ENCODE measurements at regions of chr18 and their contacts with region 1.

Region 1: DNA sequence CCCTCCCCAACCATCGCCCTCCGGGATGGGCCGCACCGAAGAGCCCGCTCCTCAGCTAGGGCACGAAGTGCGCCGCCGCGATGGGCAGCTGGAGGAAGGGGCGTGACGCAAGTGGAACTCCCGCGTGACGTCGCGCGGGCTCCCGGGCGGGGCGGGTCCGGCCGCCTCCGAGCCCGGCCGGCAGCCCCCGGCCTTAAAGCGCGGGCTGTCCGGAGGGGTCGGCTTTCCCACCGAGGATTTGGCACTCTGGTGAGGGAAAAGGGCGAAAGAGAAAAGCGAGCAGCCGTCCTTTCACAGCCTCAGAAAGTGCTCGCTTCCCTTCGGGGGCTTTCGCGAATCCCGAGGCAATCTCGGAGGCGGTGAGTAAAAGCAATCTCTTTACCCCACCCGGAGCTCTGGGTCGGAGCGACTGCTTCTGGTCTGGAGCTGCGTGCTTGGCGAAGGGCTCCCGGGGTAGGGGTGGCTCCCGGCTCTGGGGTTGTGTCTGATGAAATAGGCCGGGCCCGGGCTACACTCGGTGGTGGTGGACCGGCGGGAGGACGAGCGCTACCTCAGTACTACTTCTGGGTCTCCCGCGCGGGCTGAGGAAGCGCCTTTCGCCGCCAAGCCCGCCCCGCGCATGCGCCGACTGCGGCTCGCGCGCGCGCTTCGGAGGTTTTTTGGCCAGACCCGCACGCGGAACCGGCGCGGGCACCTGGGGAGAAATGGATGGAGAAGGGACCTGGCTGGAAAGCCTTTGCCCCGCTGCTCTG is at the start of gene RBBP8:
- DNase-seq: peak; percentile 89
- ATAC-seq: peak; percentile 76
- H3K4me3 Mint-ChIP-seq: peak within 1 kb of the TSS; percentile 89
- H3K27ac Mint-ChIP-seq: peak within 1 kb of the TSS; percentile 96
- H3K4me1 Mint-ChIP-seq: peaks cover 17% of the 10 kb centered on the region
- H3K27me3 Mint-ChIP-seq: no peaks in the 10 kb centered on the region
- total RNA-seq, gene RBBP8: 74.3 to 101 TPM

Region 2: DNA sequence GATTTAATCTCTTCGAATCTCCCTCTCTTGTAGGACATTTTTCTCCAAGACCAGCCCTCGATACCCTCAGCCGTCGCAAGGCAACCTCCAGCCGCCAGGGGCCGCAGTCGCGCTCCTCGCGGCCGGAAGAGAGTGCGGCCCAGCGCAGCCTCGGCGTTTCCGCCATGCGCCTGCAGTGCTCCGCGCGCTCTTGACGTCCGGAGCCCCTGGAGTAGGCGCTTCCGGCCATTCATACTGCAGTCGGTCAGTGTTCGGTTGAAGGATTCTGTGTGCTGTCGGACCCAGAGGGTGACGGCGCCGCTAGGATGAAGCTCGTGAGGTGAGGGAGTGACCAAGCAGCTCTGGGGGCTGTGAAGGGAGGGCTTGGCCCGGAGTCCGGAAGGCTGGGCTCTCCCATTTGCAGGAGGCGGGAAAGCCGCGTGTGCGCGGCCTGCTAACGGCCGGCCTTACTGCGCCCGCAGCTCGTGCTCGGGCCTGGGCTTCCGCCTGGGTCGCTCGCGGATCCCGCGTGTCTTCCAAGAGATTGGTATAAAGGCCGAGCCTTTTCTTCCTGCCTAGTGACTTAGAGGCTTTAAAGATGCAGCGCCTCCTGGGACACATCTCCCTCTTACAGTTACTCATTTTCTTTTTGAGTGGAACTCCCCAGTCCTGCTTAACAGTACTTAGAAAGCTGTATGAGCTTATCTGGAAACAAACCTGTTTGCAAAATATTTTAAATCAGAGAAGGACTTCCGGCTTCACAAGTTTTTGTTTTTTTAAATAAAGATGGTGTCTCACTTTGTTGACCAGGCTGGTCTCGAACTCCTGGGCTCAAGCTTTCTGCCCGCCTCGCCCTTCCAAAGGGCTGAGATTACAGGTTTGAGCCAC is 1321.0 kb before region 1 on chr18 and contains the start of gene SNRPD1:
- CTCF ChIA-PET with region 1: no interaction called
- POLR2A ChIA-PET with region 1: no interaction called
- intact Hi-C with region 1: loop called in 1 of 2 experiments (anchors 2 kb)
- DNase-seq: peak; percentile 93
- ATAC-seq: peak; percentile 98
- H3K4me3 Mint-ChIP-seq: peak within 1 kb of the TSS; percentile 92
- H3K27ac Mint-ChIP-seq: peak within 1 kb of the TSS; percentile 99
- H3K4me1 Mint-ChIP-seq: peaks cover 34% of the 10 kb centered on the region
- H3K27me3 Mint-ChIP-seq: no peaks in the 10 kb centered on the region
- total RNA-seq, gene SNRPD1: 79.9 to 163 TPM

Region 3: GRCh38 chr18:22977847-22978701 is 44.7 kb after region 1 on chr18:
- CTCF ChIA-PET with region 1: interaction called, 30 read pairs
- POLR2A ChIA-PET with region 1: interaction called, 8 read pairs
- intact Hi-C with region 1: loop called (anchors 1 kb)
- DNase-seq: no peak
- ATAC-seq: peak; percentile 83
- H3K4me3 Mint-ChIP-seq: peak overlapping the region; percentile 46
- H3K27ac Mint-ChIP-seq: peak overlapping the region; percentile 73
- H3K4me1 Mint-ChIP-seq: peaks cover 20% of the 10 kb centered on the region
- H3K27me3 Mint-ChIP-seq: no peaks in the 10 kb centered on the region

Region 4: DNA sequence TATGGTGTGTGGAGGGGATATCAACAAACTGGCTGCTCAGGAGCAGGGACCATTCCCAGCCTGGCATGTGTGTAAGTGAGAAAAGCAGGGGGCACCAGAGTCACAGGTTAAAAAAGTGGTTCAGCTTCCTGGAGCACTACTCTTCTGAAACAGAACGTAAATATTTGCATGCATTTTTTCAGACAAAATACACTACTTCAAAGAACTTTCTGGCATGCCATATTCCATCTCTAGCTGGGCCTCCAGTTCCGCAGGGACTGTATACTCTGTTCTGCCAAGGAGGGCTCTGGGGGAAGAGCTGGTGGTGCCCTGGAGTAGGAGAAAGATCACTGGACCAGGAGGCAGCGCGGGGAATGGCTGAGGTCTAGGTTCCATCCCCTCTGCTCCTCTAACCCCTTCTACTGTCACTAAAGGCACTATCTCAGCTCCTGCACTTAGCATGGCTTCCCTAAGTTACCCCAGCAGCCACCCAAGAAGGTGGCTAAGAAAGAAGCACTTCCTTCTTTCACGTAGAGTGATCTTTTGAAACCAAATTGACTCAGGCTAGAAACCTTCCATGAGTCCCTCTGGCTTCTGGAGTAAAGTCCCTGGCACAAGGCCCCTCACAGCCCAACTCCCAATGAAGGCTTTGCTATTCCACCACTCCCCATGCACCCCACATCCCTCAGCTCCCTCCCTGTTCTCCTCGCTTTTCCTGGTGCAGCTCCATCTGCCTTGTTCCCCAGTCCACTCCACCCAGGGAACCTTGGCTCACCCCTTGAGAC is 144.3 kb after region 1 on chr18:
- CTCF ChIA-PET with region 1: no interaction called
- POLR2A ChIA-PET with region 1: no interaction called
- intact Hi-C with region 1: no loop called
- DNase-seq: no peak
- ATAC-seq: no peak
- H3K4me3 Mint-ChIP-seq: no peak overlapping the region
- H3K27ac Mint-ChIP-seq: no peak overlapping the region
- H3K4me1 Mint-ChIP-seq: peaks cover 23% of the 10 kb centered on the region
- H3K27me3 Mint-ChIP-seq: no peaks in the 10 kb centered on the region

Region 5: GRCh38 chr18:23106580-23106979 is 173.2 kb after region 1 on chr18:
- CTCF ChIA-PET with region 1: no interaction called
- POLR2A ChIA-PET with region 1: no interaction called
- intact Hi-C with region 1: no loop called
- DNase-seq: no peak
- ATAC-seq: no peak
- H3K4me3 Mint-ChIP-seq: no peak overlapping the region
- H3K27ac Mint-ChIP-seq: no peak overlapping the region
- H3K4me1 Mint-ChIP-seq: peaks cover 3% of the 10 kb centered on the region
- H3K27me3 Mint-ChIP-seq: no peaks in the 10 kb centered on the region

Region 6: DNA sequence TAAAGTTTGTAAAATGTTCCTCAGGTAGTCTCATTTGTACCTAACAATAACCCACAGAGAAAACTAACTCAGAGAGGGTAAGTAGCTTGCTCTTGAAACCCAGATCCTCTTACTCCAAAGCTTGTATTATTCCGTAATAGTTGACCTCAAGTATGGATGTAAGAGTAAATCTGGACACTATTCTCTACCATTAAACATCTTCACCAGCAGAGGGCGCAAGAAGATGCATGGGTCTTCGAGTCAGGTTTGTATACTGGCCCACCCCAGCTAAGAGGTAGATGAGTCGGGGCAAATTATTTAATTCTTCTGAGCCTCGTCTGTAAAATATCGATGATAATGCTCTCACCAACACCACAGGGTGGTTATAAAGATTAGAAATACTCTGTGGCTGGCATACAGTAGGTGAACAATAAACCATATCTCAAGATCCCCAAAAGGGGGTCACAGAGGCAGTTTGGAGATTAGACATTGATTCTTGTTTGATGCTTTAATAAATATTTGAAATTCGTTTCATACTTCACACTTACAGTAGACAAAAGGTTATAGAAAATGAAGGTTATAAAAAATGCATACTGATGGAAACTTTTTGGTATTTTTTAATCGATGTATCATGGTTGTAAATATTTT is 198.4 kb after region 1 on chr18:
- CTCF ChIA-PET with region 1: interaction called, 3 read pairs
- POLR2A ChIA-PET with region 1: no interaction called
- intact Hi-C with region 1: loop called in 1 of 2 experiments (anchors 2 kb)
- DNase-seq: peak; percentile 69
- ATAC-seq: no peak
- H3K4me3 Mint-ChIP-seq: no peak overlapping the region
- H3K27ac Mint-ChIP-seq: no peak overlapping the region
- H3K4me1 Mint-ChIP-seq: peaks cover 12% of the 10 kb centered on the region
- H3K27me3 Mint-ChIP-seq: peaks cover 17% of the 10 kb centered on the region

Region 7: GRCh38 chr18:23437357-23438045 is 504.1 kb after region 1 on chr18:
- CTCF ChIA-PET with region 1: no interaction called
- POLR2A ChIA-PET with region 1: no interaction called
- intact Hi-C with region 1: loop called in 1 of 2 experiments (anchors 1 kb)
- DNase-seq: peak; percentile 91
- ATAC-seq: peak; percentile 100
- H3K4me3 Mint-ChIP-seq: peak overlapping the region; percentile 93
- H3K27ac Mint-ChIP-seq: peak overlapping the region; percentile 89
- H3K4me1 Mint-ChIP-seq: peaks cover 17% of the 10 kb centered on the region
- H3K27me3 Mint-ChIP-seq: no peaks in the 10 kb centered on the region

Region 8: GRCh38 chr18:23586249-23587196 is 653.1 kb after region 1 on chr18 and contains the start of gene NPC1:
- CTCF ChIA-PET with region 1: no interaction called
- POLR2A ChIA-PET with region 1: no interaction called
- intact Hi-C with region 1: loop called in 1 of 2 experiments (anchors 2 kb)
- DNase-seq: peak; percentile 95
- ATAC-seq: peak; percentile 95
- H3K4me3 Mint-ChIP-seq: peak within 1 kb of the TSS; percentile 94
- H3K27ac Mint-ChIP-seq: peak within 1 kb of the TSS; percentile 91
- H3K4me1 Mint-ChIP-seq: peaks cover 39% of the 10 kb centered on the region
- H3K27me3 Mint-ChIP-seq: no peaks in the 10 kb centered on the region
- total RNA-seq, gene NPC1: 21.6 to 29.2 TPM

Measured in activated CD4-positive, alpha-beta T cell treated with anti-CD3 and anti-CD28 coated beads for 36 hours (primary cell).